Activated CD4-positive, alpha-beta memory T cell treated with anti-CD3 and anti-CD28 coated beads, Interleukin-2, amount 10 ng/mL, durations not matched to agents 7 days and 5 days (primary cell): ENCODE measurements at regions of chr2 and their contacts with region 1.

Region 1: GRCh38 chr2:168194784-168195522 is 52.4 kb downstream of the STK39 start:
- DNase-seq: peak; percentile 58
- H3K4me3 Mint-ChIP-seq: peak overlapping the region; percentile 65
- H3K27ac Mint-ChIP-seq: peak overlapping the region; percentile 93
- H3K4me1 Mint-ChIP-seq: peaks cover 72% of the 10 kb centered on the region
- H3K27me3 Mint-ChIP-seq: no peaks in the 10 kb centered on the region

Region 2: GRCh38 chr2:168174756-168175155 is 20.2 kb before region 1 on chr2:
- CTCF ChIA-PET with region 1: interaction called, 4 read pairs
- POLR2A ChIA-PET with region 1: interaction called, 11 read pairs
- DNase-seq: peak; percentile 50
- H3K4me3 Mint-ChIP-seq: peak overlapping the region; percentile 46
- H3K27ac Mint-ChIP-seq: peak overlapping the region; percentile 74
- H3K4me1 Mint-ChIP-seq: peaks cover 52% of the 10 kb centered on the region
- H3K27me3 Mint-ChIP-seq: no peaks in the 10 kb centered on the region

Region 3: DNA sequence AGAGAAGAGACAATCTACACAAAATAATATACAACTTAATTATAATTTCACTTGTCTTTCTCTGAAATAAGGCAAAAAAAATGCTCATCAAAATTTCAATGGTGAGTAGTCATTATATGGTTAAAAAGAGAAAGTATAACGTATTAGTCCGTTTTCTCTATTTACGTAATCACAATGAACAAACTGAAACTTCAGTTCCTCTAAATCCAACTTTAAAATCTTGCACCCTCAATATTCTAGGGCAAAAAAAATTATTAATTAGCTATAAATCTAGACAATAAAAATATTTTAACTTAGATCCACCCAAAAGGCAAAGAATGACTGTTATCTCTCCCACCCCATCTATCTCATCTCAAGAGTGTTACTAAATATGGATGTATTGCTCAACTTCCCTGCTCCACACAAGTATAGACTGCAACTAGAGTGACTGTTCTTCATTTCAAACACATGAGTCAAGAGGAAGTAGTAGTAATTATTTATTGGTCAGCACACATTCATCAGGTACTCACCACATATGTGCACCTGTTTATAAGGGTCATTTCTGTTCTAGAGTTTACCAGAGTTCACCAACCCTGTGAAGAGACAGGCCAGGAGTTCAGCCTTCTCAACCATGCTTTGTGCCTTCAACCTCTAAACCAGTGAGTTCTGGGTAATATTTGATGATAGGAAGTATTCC is 16.1 kb after region 1 on chr2:
- CTCF ChIA-PET with region 1: interaction called, 12 read pairs
- POLR2A ChIA-PET with region 1: interaction called, 31 read pairs
- DNase-seq: no peak
- H3K4me3 Mint-ChIP-seq: peak overlapping the region; percentile 42
- H3K27ac Mint-ChIP-seq: peak overlapping the region; percentile 78
- H3K4me1 Mint-ChIP-seq: peaks cover 53% of the 10 kb centered on the region
- H3K27me3 Mint-ChIP-seq: no peaks in the 10 kb centered on the region

Region 4: DNA sequence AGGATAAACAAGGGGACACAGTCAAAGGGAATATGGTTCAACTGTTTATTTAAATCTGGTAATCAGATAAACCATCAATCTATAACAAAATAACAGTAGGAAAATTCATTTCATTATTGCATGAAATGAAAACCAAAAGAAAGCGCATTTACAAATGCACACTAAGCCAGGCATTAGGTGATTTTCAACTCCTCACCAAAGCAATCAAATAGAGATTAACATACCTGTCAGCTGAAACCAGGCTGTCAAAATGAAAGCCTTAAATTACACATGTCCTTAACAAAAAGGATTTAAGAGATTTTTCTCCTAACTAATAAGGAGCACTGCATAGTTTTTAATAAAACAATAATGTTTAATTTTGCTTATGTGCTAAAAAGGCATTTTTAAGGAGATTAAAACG is 29.4 kb after region 1 on chr2:
- CTCF ChIA-PET with region 1: no interaction called
- POLR2A ChIA-PET with region 1: no interaction called
- DNase-seq: no peak
- H3K4me3 Mint-ChIP-seq: no peak overlapping the region
- H3K27ac Mint-ChIP-seq: no peak overlapping the region
- H3K4me1 Mint-ChIP-seq: peaks cover 27% of the 10 kb centered on the region
- H3K27me3 Mint-ChIP-seq: no peaks in the 10 kb centered on the region

Region 5: GRCh38 chr2:168252976-168253764 is 58.2 kb after region 1 on chr2:
- CTCF ChIA-PET with region 1: no interaction called
- POLR2A ChIA-PET with region 1: no interaction called
- DNase-seq: no peak
- H3K4me3 Mint-ChIP-seq: no peak overlapping the region
- H3K27ac Mint-ChIP-seq: no peak overlapping the region
- H3K4me1 Mint-ChIP-seq: peaks cover 11% of the 10 kb centered on the region
- H3K27me3 Mint-ChIP-seq: no peaks in the 10 kb centered on the region